T-cell (primary cell): ENCODE measurements at regions of chr11 and their contacts with region 1.

Region 1: DNA sequence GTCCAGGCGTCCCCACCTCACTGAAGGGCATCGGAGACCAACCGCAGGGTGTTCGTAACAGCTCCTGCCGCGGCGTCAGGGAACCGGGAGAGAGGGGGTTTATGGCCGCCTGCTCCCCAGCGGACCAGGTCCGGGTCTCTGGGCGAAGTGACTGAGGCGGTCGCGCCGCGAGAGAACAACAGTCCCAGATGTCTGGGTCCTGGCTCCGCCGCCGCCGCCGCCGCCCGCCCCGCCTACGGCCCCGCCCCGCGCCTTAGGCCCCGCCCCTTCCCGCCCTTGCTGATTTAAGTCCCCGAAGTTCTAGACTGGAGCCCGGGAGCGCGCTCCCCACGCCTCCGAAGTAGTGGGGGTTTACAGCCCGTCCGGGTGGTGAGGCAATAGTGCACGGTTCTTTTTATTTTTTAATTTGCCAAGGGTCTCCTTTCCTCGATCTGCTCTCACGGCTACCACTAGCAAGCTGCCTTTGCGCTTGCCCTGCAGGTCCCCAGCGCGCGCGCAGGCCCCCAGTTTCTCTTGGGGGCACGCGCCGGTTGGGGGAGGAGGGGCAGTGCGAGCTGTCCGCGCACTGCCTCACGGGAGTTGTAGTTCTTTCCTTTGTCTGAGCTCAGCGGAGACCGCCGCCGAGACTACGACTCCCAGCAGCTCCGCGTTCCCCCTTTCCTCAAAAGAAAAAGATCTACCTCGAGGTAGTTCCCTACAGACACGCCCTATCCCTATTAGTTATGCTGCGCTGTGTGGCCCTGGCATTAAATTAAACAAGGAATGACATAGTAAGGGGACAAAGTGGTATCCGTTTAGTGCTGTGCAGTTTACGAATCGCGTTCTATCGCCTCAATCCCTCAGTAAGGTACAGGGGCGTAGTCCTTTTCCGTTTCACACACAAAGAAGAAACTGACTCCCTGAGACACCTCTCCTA is at the start of gene PGM2L1:
- DNase-seq: peak; percentile 86 to 96 (median 93)
- ATAC-seq: peak; percentile 86 to 89 (median 87)
- H3K4me3 ChIP-seq: peak within 1 kb of the TSS; percentile 74 to 97
- H3K4me3 Mint-ChIP-seq: peak within 1 kb of the TSS; percentile 91 to 100 (median 99)
- H3K27ac ChIP-seq: peak within 1 kb of the TSS; percentile 72
- H3K27ac Mint-ChIP-seq: peak within 1 kb of the TSS; percentile 98
- H3K4me1 ChIP-seq: peaks cover 8 to 11% of the 10 kb centered on the region in 2 experiments
- H3K4me1 Mint-ChIP-seq: peaks cover 31 to 34% (median 34%) of the 10 kb centered on the region in 3 donors
- H3K27me3 ChIP-seq: no peaks in the 10 kb centered on the region
- H3K27me3 Mint-ChIP-seq: no peaks in the 10 kb centered on the region
- total RNA-seq, gene PGM2L1: 8.6 to 17.0 (median 15.0) TPM

Region 2: DNA sequence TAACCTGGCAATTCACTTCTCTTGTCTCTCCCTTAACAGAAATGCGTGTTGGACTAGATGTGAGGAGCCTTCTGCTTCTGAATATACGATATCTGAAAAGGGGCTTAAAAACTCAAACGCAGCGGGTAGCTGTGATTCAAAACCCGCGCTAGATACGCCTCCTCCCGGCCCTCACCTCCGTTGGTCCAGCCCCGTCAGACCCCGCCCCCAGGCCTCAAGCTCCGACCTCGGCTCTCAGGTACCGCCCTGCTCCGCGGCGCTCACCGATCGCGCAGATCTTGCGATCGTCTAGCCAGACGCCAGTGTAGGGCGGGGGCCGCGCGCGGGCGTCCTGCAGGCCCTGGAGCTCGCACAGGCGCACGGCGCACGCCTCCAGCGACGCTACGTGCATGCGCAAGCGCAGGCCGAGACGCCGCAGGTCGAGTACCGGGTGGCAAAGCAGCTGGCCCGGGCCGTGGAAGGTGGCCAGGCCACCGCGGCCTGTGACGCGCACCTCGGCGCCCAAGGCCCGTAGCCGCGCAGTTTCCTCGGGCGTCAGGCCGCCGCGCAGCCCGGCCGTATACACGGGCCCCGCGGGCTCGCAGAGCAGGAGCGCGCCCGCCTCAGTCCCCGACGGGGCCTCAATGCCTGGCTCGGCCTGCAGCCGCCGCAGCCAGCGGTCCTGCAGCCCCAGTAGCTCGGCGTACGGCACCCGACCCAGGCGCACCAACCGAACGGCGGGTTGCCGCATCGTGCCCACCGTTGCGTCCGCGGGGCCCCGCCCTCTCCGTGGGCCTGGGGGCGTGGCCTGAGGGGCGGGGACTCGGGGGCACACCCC is 94.7 kb after region 1 on chr11 and contains the start of gene LIPT2:
- CTCF ChIA-PET with region 1: interaction called in 1 of 2 experiments, 6 read pairs
- POLR2A ChIA-PET with region 1: interaction called, 4 to 16 read pairs
- DNase-seq: peak; percentile 90 to 99 (median 98)
- ATAC-seq: peak; percentile 94 to 98 (median 97)
- H3K4me3 ChIP-seq: peak within 1 kb of the TSS; percentile 54 to 68
- H3K4me3 Mint-ChIP-seq: peak within 1 kb of the TSS; percentile 82 to 83 (median 83)
- H3K27ac ChIP-seq: peak within 1 kb of the TSS; percentile 52
- H3K27ac Mint-ChIP-seq: peak within 1 kb of the TSS; percentile 94
- H3K4me1 ChIP-seq: peaks cover 5 to 15% of the 10 kb centered on the region in 2 experiments
- H3K4me1 Mint-ChIP-seq: peaks cover 26 to 31% (median 27%) of the 10 kb centered on the region in 3 donors
- H3K27me3 ChIP-seq: no peaks in the 10 kb centered on the region
- H3K27me3 Mint-ChIP-seq: no peaks in the 10 kb centered on the region
- total RNA-seq, gene LIPT2: 8.9 to 16.1 (median 11.5) TPM

Region 3: DNA sequence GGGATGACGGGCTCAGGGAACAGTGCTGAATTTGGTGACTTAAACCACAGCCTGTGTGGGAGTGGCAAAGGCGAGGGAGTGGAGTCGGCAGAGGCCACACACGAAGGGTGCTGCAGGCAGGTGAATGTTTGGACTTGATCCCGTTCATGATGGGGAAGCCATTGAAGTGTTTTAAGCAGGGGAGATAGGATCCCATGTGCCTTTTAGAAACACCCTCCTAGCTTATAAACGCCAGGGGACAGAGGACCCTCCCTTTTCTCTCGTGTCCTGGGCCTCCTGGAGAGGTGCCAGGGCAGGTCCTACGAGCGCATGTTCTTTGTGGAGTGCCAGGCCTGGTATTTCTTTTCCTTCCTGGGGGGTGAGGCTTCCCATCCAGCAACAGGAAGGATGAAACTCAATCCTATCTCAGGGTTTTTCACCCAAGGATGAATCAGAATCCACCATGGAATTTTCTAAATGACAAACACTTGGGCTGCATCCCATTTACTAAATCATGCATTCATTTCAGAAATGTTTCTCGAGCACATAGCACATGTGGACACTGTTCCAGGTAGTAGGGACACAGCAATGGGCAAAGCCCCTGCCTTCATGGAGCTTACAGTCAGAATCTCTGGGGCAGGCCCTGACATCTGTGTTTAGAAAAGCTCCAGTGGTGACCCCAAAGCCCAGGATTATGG is 273.2 kb after region 1 on chr11:
- CTCF ChIA-PET with region 1: no interaction called
- POLR2A ChIA-PET with region 1: no interaction called
- DNase-seq: no peak
- ATAC-seq: no peak
- H3K4me3 ChIP-seq: no peak overlapping the region
- H3K4me3 Mint-ChIP-seq: no peak overlapping the region
- H3K27ac ChIP-seq: no peak overlapping the region
- H3K27ac Mint-ChIP-seq: no peak overlapping the region
- H3K4me1 ChIP-seq: no peaks in the 10 kb centered on the region
- H3K4me1 Mint-ChIP-seq: no peaks in the 10 kb centered on the region
- H3K27me3 ChIP-seq: no peaks in the 10 kb centered on the region
- H3K27me3 Mint-ChIP-seq: no peaks in the 10 kb centered on the region